CD4-positive, alpha-beta T cell (primary cell): ENCODE measurements at regions of chr15 and their contacts with region 1.

Region 1: GRCh38 chr15:90620379-90621067 is 90.8 kb downstream of the CRTC3 start:
- DNase-seq: peak in 7 of 14 experiments; percentile 10 to 52 (median 40)
- ATAC-seq: peak; percentile 71
- H3K4me3 ChIP-seq: peak overlapping the region; percentile 6
- H3K4me3 Mint-ChIP-seq: peak overlapping the region; percentile 25
- H3K27ac ChIP-seq: peak overlapping the region in 1 of 2 donors; percentile 41
- H3K27ac Mint-ChIP-seq: peak overlapping the region; percentile 89
- H3K4me1 ChIP-seq: peaks cover 24% of the 10 kb centered on the region
- H3K4me1 Mint-ChIP-seq: peaks cover 46% of the 10 kb centered on the region
- H3K27me3 ChIP-seq: no peaks in the 10 kb centered on the region
- H3K27me3 Mint-ChIP-seq: no peaks in the 10 kb centered on the region
- CTCF ChIP-seq: no peak

Region 2: GRCh38 chr15:90564051-90564450 is 56.5 kb before region 1 on chr15:
- CTCF ChIA-PET with region 1: interaction called, 3 read pairs
- POLR2A ChIA-PET with region 1: interaction called, 11 read pairs
- intact Hi-C with region 1: no loop called
- DNase-seq: peak in 3 of 14 experiments; percentile 58 to 63 (median 61)
- ATAC-seq: peak; percentile 38
- H3K4me3 ChIP-seq: no peak overlapping the region
- H3K4me3 Mint-ChIP-seq: peak overlapping the region; percentile 85
- H3K27ac ChIP-seq: peak overlapping the region; percentile 62 to 68
- H3K27ac Mint-ChIP-seq: peak overlapping the region; percentile 93
- H3K4me1 ChIP-seq: peaks cover 79% of the 10 kb centered on the region
- H3K4me1 Mint-ChIP-seq: peaks cover 87% of the 10 kb centered on the region
- H3K27me3 ChIP-seq: no peaks in the 10 kb centered on the region
- H3K27me3 Mint-ChIP-seq: no peaks in the 10 kb centered on the region
- CTCF ChIP-seq: no peak

Region 3: DNA sequence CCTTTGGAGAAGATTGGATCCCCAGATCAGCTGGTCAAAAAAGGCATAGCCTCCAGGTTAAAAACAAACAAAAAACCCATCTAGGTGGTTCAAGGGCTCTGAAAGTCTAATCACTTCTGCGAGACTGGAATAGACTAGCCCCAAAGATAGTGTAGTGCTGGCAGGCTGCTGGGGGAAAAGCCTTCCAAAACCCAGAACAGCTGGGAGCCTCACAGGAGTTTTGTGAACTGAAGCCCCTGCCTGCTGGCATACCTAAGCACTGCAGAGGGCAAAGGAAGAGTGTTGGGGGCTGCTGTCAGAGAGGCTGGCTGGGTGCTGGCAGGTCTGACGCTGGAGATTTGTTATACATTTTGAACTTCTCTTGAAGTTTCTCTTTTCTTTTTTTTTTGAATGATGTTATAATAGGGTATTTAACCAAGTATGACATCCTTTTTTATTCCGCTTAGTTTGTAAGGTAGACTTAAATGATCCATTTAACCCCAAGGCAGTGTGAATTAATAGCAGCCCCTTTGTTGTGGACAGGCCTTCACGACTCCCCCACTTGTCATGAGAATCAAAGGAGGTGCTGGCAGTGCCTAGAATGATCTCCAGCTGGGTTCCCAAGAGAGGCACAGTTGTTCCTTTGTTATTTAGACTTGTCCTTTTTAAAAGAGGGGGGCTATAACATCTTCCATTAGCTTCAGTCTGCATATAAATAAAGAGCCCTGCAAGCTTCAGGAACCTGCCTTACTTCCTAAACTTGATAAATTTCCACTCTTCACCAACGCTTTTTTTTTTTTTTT is 36.9 kb before region 1 on chr15:
- CTCF ChIA-PET with region 1: no interaction called
- POLR2A ChIA-PET with region 1: no interaction called
- intact Hi-C with region 1: no loop called
- DNase-seq: no peak
- ATAC-seq: no peak
- H3K4me3 ChIP-seq: no peak overlapping the region
- H3K4me3 Mint-ChIP-seq: no peak overlapping the region
- H3K27ac ChIP-seq: no peak overlapping the region
- H3K27ac Mint-ChIP-seq: peak overlapping the region; percentile 89
- H3K4me1 ChIP-seq: peaks cover 59% of the 10 kb centered on the region
- H3K4me1 Mint-ChIP-seq: peaks cover 66% of the 10 kb centered on the region
- H3K27me3 ChIP-seq: no peaks in the 10 kb centered on the region
- H3K27me3 Mint-ChIP-seq: no peaks in the 10 kb centered on the region
- CTCF ChIP-seq: no peak

Region 4: GRCh38 chr15:91186904-91187648 is 566.6 kb after region 1 on chr15:
- CTCF ChIA-PET with region 1: no interaction called
- POLR2A ChIA-PET with region 1: no interaction called
- intact Hi-C with region 1: no loop called
- DNase-seq: peak in 2 of 14 experiments; percentile 4 to 14
- ATAC-seq: no peak
- H3K4me3 ChIP-seq: no peak overlapping the region
- H3K4me3 Mint-ChIP-seq: no peak overlapping the region
- H3K27ac ChIP-seq: no peak overlapping the region
- H3K27ac Mint-ChIP-seq: no peak overlapping the region
- H3K4me1 ChIP-seq: no peaks in the 10 kb centered on the region
- H3K4me1 Mint-ChIP-seq: no peaks in the 10 kb centered on the region
- H3K27me3 ChIP-seq: peaks cover 13 to 36% of the 10 kb centered on the region in 2 experiments
- H3K27me3 Mint-ChIP-seq: peaks cover 59% of the 10 kb centered on the region
- CTCF ChIP-seq: no peak

Region 5: DNA sequence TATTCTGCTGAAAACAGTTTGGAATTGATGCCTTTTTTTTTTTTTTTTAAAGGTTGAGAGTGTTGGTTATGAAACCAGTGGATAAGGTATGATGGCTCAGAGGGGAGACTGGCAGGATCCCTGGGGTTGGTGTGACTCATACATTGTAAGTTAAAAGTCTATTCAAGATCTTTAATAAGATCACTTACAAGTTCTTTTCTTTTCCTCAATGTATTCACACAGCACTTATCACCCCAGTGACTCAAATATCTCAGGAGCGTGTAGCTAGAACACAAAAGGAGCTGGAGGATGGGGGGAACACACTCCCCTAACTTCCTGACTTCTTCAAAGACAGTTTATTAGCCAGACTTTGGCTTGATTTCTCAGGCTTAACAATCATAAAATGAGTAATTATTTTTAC is 764.8 kb after region 1 on chr15:
- CTCF ChIA-PET with region 1: no interaction called
- POLR2A ChIA-PET with region 1: no interaction called
- intact Hi-C with region 1: no loop called
- DNase-seq: no peak
- ATAC-seq: no peak
- H3K4me3 ChIP-seq: no peak overlapping the region
- H3K4me3 Mint-ChIP-seq: no peak overlapping the region
- H3K27ac ChIP-seq: no peak overlapping the region
- H3K27ac Mint-ChIP-seq: no peak overlapping the region
- H3K4me1 ChIP-seq: no peaks in the 10 kb centered on the region
- H3K4me1 Mint-ChIP-seq: no peaks in the 10 kb centered on the region
- H3K27me3 ChIP-seq: no peaks in the 10 kb centered on the region
- H3K27me3 Mint-ChIP-seq: peaks cover 4% of the 10 kb centered on the region
- CTCF ChIP-seq: no peak